Left ventricle myocardium inferior (tissue), 1 donor: ENCODE measurements at regions of chr2 and their contacts with region 1.

Region 1: GRCh38 chr2:105734762-105735538 is 9.8 kb upstream of the NCK2 start:
- DNase-seq: no peak
- H3K4me3 ChIP-seq: no peak overlapping the region
- H3K27ac ChIP-seq: peak overlapping the region; percentile 45
- H3K4me1 ChIP-seq: peaks cover 43% of the 10 kb centered on the region
- H3K27me3 ChIP-seq: no peaks in the 10 kb centered on the region
- CTCF ChIP-seq: no peak

Region 2: DNA sequence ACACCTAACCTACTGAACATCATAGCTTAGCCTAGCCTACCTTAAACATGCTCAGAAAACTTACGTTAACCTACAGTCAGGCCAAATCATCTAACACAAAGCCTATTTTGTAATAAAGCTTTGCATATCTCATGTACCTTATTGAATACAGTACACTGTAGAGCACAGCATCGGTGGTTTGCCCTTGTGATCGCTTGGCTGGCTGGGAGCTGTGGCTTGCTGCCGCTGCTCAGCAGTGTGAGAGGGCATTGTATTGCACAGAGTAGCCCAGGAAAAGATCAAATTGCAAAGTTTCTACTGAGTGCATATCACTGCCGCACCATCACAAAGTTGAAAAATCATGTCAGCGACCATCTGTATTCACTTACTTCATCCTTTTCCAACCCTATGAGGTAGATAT is 52.5 kb before region 1 on chr2:
- intact Hi-C with region 1: loop called (anchors 5 kb)
- DNase-seq: no peak
- H3K4me3 ChIP-seq: no peak overlapping the region
- H3K27ac ChIP-seq: no peak overlapping the region
- H3K4me1 ChIP-seq: no peaks in the 10 kb centered on the region
- H3K27me3 ChIP-seq: no peaks in the 10 kb centered on the region
- CTCF ChIP-seq: no peak